ENCODE measurements at regions of chr9 and their contacts with region 1.

Region 1: GRCh38 chr9:128370826-128371621 is at the start of gene URM1:
- DNase-seq: peak; percentile 95
- ATAC-seq: peak; percentile 92
- H3K4me3 ChIP-seq: peak within 1 kb of the TSS; percentile 97
- H3K27ac ChIP-seq: peak within 1 kb of the TSS; percentile 77
- H3K4me1 ChIP-seq: peaks cover 12% of the 10 kb centered on the region; the same call in 1 of the 2 replicates
- H3K27me3 ChIP-seq: no peaks in the 10 kb centered on the region
- CTCF ChIP-seq: 0 out of 2 replicates have a peak, but pooled peaks have one; percentile 23
- total RNA-seq, gene URM1: 29.1 and 35.7 TPM in 2 replicates

Region 2: DNA sequence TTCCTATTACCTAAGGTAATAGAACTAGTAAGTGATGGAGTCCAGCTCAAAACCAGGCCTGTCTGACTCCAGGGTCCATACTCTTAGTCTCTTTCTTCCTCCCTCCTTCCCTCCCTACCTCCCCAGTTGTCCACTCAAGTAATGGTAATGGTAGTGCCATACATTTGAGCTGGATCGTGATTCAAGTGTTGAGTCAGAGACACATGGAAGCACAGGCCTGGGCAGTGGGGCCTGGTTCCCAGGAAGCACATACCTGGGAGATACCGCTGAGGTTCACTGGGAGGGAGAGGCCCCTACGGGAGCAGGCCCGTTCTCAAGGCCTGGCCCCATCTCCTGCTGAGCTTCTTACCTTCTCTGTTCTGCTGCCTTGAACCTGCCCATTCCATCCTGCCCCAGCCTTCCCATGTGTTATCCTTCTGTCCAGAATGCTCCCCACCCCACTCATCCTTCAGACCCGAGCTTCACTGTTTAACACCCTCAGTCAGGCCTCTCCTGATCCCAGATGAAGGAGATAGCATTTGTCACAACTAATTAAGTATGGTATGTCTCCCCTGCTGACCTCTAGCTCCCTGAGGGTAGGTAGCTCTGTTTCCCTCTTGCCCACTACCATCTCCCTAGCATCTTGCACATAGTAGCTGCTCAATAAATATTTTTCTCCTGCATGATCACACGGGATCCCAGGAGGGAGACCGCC is 13.9 kb after region 1 on chr9:
- CTCF ChIA-PET with region 1: no interaction called
- POLR2A ChIA-PET with region 1: interaction called, 12 read pairs
- intact Hi-C with region 1: no loop called
- DNase-seq: no peak
- ATAC-seq: no peak
- H3K4me3 ChIP-seq: no peak overlapping the region
- H3K27ac ChIP-seq: no peak overlapping the region
- H3K4me1 ChIP-seq: no peaks in the 10 kb centered on the region
- H3K27me3 ChIP-seq: no peaks in the 10 kb centered on the region
- CTCF ChIP-seq: no peak

Region 3: DNA sequence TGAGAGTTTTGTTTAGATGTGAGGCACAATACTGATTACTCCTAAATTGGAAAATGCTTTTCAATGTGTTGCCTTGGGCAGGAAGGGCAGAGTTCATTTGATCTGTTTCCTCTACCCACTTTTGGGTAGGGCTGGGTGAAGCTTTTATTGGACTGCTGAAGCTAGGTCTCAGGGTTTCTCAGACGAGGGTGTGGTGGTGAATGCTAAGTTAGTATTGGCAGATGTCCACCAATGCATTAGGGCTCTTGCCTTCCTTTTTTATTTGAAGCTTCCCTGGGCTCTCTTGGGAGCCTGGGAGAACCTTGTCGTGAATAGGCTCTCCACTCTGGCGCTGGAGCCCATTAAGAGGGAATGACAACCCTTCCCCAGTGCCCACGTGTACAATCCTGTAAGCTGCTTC is 204.4 kb after region 1 on chr9:
- CTCF ChIA-PET with region 1: no interaction called
- POLR2A ChIA-PET with region 1: interaction called, 14 read pairs
- intact Hi-C with region 1: no loop called
- DNase-seq: no peak
- ATAC-seq: peak; percentile 84
- H3K4me3 ChIP-seq: no peak overlapping the region
- H3K27ac ChIP-seq: no peak overlapping the region
- H3K4me1 ChIP-seq: no peaks in the 10 kb centered on the region
- H3K27me3 ChIP-seq: no peaks in the 10 kb centered on the region
- CTCF ChIP-seq: no peak